ENCODE measurements at regions of chr6 and their contacts with region 1.

Region 1: DNA sequence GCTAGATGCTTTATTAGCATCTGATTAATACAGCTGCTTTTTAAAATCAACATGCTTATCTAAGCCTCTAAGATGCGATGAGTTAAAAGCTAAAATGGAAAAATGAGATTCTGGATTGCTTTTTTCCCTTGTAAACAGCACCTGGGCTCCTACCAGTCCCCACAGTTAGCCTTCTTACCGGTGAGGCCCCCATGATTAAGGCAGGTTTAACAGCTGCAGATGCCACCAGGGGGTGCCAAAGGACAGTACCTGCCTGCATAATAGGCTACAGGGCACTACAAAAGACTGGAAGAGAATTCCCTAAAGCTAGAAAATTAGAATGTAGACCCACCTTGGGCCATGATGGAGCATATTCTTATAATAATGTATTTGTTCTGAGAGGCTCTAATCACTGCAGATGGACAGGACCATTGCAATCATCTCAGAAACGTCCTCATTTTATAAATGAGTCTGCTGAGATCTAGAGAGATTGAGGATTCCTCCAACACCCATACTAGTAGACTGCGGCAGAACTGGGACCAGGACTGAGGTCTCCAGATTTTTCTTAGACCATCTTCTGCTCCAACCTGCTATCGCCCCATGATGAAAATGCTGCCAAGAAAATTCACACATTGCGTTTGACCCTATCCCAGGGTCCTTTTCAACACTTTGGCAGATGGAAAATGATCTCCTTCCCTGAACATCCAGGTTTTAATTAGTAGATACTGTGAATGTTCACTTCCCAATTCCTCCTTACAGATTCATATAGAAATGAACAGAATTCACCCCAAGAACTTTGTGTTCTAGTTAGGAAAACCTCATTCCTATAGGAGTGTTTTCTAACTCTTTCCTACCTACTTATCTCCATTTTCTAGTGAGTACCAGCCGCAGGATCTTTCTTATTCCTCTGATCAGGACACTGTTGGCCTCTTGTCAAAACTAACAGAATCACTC is 148.8 kb downstream of the RPS12 start:
- DNase-seq: peak; percentile 89
- H3K4me3 Mint-ChIP-seq: no peak overlapping the region
- H3K27ac Mint-ChIP-seq: no peak overlapping the region
- H3K4me1 Mint-ChIP-seq: peaks cover 43% of the 10 kb centered on the region
- H3K27me3 Mint-ChIP-seq: peaks cover 6% of the 10 kb centered on the region
- CTCF ChIP-seq: peak; percentile 87

Region 2: DNA sequence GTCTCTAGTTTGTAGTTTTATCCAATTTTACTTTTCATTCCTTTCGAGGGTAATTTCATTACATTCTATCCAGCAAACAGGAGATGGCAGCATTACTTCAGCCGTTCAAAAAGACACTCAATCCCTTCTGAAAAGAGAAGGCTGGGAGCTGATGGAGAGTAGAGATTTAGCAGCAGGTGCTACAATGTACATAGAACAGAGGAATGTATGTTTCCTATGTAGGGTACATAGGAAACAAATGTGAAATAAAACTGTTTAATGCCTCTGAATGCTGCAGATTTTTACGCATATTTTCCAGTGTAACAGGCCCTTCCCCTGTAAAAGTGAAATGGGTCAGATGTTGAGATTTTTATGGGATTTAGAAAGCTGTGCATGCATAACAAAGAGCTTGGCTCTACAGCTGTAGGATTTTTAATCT is 132.9 kb before region 1 on chr6:
- CTCF ChIA-PET with region 1: interaction called, 8 read pairs
- intact Hi-C with region 1: loop called (anchors 2 kb)
- DNase-seq: peak; percentile 34
- H3K4me3 Mint-ChIP-seq: no peak overlapping the region
- H3K27ac Mint-ChIP-seq: no peak overlapping the region
- H3K4me1 Mint-ChIP-seq: no peaks in the 10 kb centered on the region
- H3K27me3 Mint-ChIP-seq: no peaks in the 10 kb centered on the region
- CTCF ChIP-seq: peak; percentile 48

Region 3: GRCh38 chr6:133040094-133040802 is 77.0 kb after region 1 on chr6:
- CTCF ChIA-PET with region 1: no interaction called
- intact Hi-C with region 1: loop called (anchors 2 kb)
- DNase-seq: peak; percentile 61
- H3K4me3 Mint-ChIP-seq: no peak overlapping the region
- H3K27ac Mint-ChIP-seq: no peak overlapping the region
- H3K4me1 Mint-ChIP-seq: peaks cover 16% of the 10 kb centered on the region
- H3K27me3 Mint-ChIP-seq: no peaks in the 10 kb centered on the region
- CTCF ChIP-seq: peak; percentile 57

Region 4: DNA sequence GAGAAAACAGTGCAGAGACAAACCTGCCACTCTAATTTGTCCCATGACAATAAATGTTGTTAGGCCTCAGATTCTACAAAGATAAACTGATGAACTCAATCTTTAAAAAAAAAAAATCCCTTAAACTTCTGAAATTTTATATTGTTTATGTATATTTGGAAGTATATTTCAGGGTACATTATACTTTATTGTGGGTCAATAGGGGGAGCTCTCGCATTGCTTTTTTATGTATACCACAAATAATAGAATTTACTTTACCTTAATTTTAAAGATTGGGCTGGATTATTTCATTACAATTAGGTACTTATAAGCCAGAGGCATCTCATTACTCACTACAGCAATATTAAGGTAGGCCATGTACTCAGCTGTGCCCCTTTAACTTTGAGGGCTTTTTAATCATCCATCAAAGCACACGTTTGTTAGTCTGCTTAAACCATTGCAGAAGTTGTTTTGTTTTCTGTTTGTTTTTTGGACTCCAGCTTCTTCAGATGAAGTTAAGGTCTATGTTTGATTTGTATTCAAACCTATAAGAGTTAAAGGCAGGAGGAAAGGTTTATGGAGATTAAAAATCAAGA is 221.7 kb after region 1 on chr6:
- CTCF ChIA-PET with region 1: interaction called, 4 read pairs
- intact Hi-C with region 1: loop called (anchors 5 kb)
- DNase-seq: no peak
- H3K4me3 Mint-ChIP-seq: no peak overlapping the region
- H3K27ac Mint-ChIP-seq: no peak overlapping the region
- H3K4me1 Mint-ChIP-seq: peaks cover 9% of the 10 kb centered on the region
- H3K27me3 Mint-ChIP-seq: no peaks in the 10 kb centered on the region
- CTCF ChIP-seq: peak; percentile 59

Region 5: GRCh38 chr6:133512410-133513016 is 549.3 kb after region 1 on chr6:
- CTCF ChIA-PET with region 1: no interaction called
- intact Hi-C with region 1: loop called (anchors 2 kb)
- DNase-seq: peak; percentile 62
- H3K4me3 Mint-ChIP-seq: no peak overlapping the region
- H3K27ac Mint-ChIP-seq: no peak overlapping the region
- H3K4me1 Mint-ChIP-seq: peaks cover 22% of the 10 kb centered on the region
- H3K27me3 Mint-ChIP-seq: no peaks in the 10 kb centered on the region
- CTCF ChIP-seq: peak; percentile 57